ENCODE measurements at regions of chr10 and their contacts with region 1.

Region 1: GRCh38 chr10:95333997-95334804 is 43.4 kb upstream of the PDLIM1 start:
- DNase-seq: peak; percentile 88

Region 2: GRCh38 chr10:95236068-95236903 is 97.9 kb before region 1 on chr10:
- intact Hi-C with region 1: no loop called
- DNase-seq: no peak

Region 3: DNA sequence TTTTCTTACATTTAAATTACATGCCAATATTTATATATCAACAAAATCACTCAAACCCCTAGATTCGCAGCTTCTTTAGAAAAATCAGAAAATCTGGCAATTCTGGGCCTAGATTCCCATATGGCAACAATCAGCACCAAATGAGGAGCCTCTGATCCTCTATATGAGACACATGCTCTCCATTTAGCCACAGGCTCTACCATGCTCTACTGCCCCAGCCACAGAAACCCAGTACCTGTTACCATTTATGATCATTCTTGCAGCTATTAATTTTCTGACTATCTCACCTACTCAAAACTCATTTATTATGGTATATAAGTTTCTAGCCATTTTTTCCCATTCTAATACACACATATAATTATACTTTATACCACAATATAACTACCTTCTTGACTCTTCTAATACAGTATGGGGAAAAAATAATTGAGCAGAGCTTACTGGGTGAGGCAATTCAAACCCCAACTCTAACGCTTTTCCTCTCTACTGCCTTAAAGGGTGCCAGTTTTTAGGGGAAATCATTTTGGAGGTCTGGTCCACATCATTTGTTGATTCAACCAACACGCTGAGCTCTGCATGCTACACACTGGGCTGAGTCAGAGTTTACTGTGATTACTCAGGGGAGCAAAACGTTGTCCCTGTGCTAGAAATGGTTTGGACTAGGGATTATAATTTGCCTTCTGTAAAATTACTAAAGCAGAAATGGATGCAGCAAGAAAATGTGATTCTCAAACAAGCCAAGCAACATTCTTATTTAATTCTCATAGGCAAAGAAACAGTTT is 55.0 kb before region 1 on chr10:
- intact Hi-C with region 1: loop called (anchors 5 kb)
- DNase-seq: no peak

Region 4: GRCh38 chr10:95308389-95309302 is 25.6 kb before region 1 on chr10:
- intact Hi-C with region 1: loop called (anchors 1 kb)
- DNase-seq: peak; percentile 88

Region 5: GRCh38 chr10:95792874-95793285 is 458.7 kb after region 1 on chr10:
- intact Hi-C with region 1: no loop called
- DNase-seq: no peak

Measured in cardiac septum (tissue), 1 donor.